Esophagus squamous epithelium (tissue), 5 donors: ENCODE measurements at regions of chr16 and their contacts with region 1.

Region 1: GRCh38 chr16:22206013-22206841 is at the start of gene EEF2K:
- DNase-seq: peak; percentile 44
- H3K4me3 ChIP-seq: peak within 1 kb of the TSS; percentile 67 to 90 (median 78)
- H3K27ac ChIP-seq: peak within 1 kb of the TSS; percentile 81 to 94 (median 88)
- H3K4me1 ChIP-seq: peaks cover 23 to 74% (median 29%) of the 10 kb centered on the region in 3 donors
- H3K27me3 ChIP-seq: no peaks in the 10 kb centered on the region
- CTCF ChIP-seq: peak; percentile 78 to 91 (median 88)
- POLR2A ChIP-seq: peak in 2 of 4 donors; percentile 35 to 56
- total RNA-seq, gene EEF2K: 10.6 to 26.9 (median 16.2) TPM

Region 2: DNA sequence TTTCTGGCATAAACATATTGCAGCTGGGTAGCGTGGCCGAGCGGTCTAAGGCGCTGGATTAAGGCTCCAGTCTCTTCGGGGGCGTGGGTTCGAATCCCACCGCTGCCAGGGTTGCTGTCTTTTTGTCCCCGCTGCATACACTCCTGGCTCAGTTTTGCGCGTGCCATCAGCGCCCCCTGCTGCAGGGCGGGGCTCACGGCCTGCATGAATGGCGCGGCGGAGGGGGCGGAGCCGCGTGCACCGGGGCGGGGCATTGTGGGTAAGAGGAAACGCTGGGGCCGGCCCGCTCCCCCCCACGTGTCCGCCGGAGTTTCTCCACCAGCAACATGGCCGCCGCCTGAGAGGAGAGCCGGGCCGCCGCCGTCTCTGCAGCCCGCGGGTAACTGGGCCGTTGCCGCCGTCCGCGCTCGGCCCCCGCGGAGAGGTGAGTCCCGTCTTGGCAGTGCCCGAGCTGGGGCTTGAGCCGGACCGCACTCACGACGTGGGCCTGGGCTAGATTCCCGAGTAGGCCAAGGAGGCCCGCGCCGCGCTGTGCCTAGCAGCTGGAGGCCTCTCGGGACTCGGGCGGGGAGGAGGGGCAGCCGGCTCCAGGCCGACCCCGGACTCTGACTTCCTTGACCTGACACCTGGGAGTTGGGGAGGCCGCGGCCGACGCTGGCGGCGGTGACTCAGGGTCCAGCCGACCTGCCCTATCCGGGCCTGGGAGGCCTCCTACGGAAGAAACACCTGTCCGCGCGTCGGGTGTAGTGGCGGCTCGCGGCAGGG is 91.1 kb after region 1 on chr16 and contains the start of gene POLR3E:
- intact Hi-C with region 1: loop called (anchors 5 kb)
- DNase-seq: peak; percentile 89
- H3K4me3 ChIP-seq: peak within 1 kb of the TSS; percentile 78 to 93 (median 88)
- H3K27ac ChIP-seq: peak within 1 kb of the TSS; percentile 93 to 98 (median 96)
- H3K4me1 ChIP-seq: peaks cover 12 to 53% (median 13%) of the 10 kb centered on the region in 3 donors
- H3K27me3 ChIP-seq: no peaks in the 10 kb centered on the region
- CTCF ChIP-seq: peak; percentile 81 to 100 (median 98)
- POLR2A ChIP-seq: peak in 3 of 4 donors; percentile 13 to 72 (median 32)
- total RNA-seq, gene POLR3E: 21.5 to 57.2 (median 37.7) TPM

Region 3: DNA sequence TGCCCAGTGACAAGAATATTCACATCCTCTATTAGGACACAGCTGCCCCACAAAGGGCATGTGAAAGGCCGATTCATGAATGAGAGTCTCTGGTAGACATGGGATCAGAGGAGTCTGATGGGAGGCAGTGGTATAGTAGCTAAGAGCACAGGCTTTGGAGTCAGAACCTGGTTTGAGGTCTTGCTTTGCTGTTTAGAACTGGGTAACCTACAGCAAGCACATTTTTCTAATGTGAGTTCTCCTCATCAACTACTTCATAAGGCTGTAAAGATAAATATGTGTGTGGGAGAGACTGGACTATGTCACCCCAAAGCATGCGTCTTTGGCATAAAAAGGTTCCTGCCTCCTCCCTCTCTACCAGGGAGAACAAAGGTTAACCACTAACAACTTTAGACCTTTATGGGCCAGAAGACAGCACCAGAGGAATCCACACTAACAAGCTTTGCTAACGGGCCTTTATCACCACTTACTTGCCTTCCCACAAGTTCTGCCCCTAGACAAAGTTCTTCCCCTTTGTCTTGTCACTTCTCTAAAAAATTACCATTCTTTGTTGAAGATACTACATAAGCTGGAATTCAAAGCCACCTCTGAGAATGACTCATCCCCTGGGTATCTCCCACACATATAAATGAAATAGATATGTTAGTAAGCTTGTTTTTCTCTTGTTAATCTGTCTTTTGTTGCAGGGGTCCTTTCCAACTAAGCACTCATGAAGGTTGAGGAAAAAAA is 147.1 kb after region 1 on chr16:
- intact Hi-C with region 1: no loop called
- DNase-seq: no peak
- H3K4me3 ChIP-seq: no peak overlapping the region
- H3K27ac ChIP-seq: peak overlapping the region in 2 of 4 donors; percentile 14 to 29
- H3K4me1 ChIP-seq: peaks cover 0 to 29% (median 10%) of the 10 kb centered on the region in 3 donors
- H3K27me3 ChIP-seq: no peaks in the 10 kb centered on the region
- CTCF ChIP-seq: no peak
- POLR2A ChIP-seq: no peak

Region 4: GRCh38 chr16:22659933-22660332 is 453.7 kb after region 1 on chr16:
- intact Hi-C with region 1: no loop called
- DNase-seq: no peak
- H3K4me3 ChIP-seq: no peak overlapping the region
- H3K27ac ChIP-seq: no peak overlapping the region
- H3K4me1 ChIP-seq: no peaks in the 10 kb centered on the region
- H3K27me3 ChIP-seq: peaks cover 0 to 33% (median 0%) of the 10 kb centered on the region in 4 donors
- CTCF ChIP-seq: no peak
- POLR2A ChIP-seq: no peak